ENCODE measurements at regions of chr4 and their contacts with region 1.

Region 1: DNA sequence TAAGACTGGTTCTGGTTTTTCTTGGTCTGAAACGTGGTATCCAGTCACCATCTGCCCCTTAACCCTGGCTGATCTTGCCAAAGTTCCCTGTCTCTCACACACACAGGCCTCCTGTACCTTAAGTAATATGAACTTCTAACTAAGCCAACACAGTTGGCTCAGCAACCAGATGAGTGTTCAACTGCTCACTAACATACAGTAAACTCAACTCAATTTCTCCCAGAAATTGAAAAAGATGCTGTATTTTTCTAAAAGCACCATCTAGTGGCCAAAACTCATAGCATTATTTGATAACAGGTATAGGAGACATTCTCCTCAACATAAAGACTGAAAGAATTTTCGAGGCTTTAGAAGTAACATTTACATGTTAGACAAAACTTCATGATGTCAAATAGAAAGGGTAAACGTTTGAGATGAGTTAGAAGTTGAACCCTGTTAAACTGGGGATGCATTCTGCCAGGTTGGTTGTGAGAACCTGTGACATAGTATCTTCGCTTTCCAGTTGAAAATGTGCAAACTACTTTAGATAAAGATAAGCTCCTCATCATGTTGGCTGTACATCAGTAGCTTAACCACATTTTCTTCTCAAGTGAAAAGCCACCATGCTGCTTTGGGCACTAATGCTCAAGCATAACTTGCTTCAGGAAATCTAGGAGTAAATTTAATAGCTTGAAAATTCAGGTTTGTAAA is 31.2 kb downstream of the CCNI start:
- DNase-seq: no peak
- H3K4me3 Mint-ChIP-seq: no peak overlapping the region
- H3K27ac Mint-ChIP-seq: no peak overlapping the region
- H3K4me1 Mint-ChIP-seq: peaks cover 4% of the 10 kb centered on the region
- H3K27me3 Mint-ChIP-seq: no peaks in the 10 kb centered on the region

Region 2: DNA sequence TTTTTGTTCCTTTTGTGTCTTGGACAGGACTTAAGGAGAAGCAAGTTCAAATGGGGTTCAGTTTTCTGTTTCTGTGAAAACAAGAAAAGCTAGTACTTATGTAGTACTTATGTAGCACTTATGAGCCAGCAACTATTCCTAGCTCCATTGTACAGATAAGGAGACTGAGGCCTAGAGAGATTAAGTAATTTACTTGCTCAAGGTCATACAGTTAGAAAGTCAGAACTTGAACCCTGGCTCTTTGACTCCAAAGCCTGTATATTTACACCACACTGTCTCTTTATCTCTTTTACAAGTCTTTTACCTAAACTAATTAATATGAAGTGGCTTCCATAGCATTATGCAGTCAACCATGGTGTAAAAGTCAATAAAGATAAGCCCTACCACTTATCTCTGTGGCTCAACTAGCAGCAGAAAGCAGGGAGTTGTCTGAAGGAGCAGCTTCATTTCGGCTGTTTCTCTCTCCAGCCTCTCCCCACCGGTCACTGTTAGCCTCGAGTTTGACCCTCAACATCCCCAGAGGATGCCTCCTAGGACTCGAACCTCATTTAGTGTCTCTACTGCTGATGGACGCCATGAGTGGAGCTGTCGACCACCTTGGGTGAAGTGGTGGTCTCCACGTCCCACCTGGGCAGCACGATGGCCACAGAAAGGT is 399.6 kb before region 1 on chr4:
- CTCF ChIA-PET with region 1: no interaction called
- DNase-seq: no peak
- H3K4me3 Mint-ChIP-seq: no peak overlapping the region
- H3K27ac Mint-ChIP-seq: no peak overlapping the region
- H3K4me1 Mint-ChIP-seq: no peaks in the 10 kb centered on the region
- H3K27me3 Mint-ChIP-seq: no peaks in the 10 kb centered on the region

Region 3: DNA sequence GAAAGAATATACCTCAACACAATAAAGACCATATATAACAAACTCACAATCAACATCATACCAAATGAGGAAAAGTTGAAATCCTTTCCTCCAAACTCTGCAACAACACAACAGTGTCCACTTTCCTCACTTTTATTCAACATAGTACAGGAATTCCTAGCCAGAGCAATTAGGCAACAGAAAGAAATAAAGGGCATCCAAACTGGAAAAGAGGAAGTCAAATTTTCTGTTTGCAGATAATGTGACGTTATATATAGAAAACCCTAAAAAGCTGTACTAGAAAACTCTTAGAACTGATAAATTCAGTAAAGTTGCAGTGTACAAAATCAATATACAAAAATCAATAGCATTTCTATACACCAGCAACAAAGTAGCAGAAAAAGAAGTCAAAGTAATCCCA is 254.2 kb before region 1 on chr4:
- CTCF ChIA-PET with region 1: no interaction called
- DNase-seq: no peak
- H3K4me3 Mint-ChIP-seq: no peak overlapping the region
- H3K27ac Mint-ChIP-seq: no peak overlapping the region
- H3K4me1 Mint-ChIP-seq: no peaks in the 10 kb centered on the region
- H3K27me3 Mint-ChIP-seq: peaks cover 7% of the 10 kb centered on the region

Region 4: GRCh38 chr4:77031544-77031943 is 13.1 kb before region 1 on chr4:
- CTCF ChIA-PET with region 1: interaction called, 14 read pairs
- DNase-seq: no peak
- H3K4me3 Mint-ChIP-seq: no peak overlapping the region
- H3K27ac Mint-ChIP-seq: no peak overlapping the region
- H3K4me1 Mint-ChIP-seq: peaks cover 51% of the 10 kb centered on the region
- H3K27me3 Mint-ChIP-seq: no peaks in the 10 kb centered on the region